HepG2 (cell line): ENCODE measurements at regions of chr5 and their contacts with region 1.

Region 1: DNA sequence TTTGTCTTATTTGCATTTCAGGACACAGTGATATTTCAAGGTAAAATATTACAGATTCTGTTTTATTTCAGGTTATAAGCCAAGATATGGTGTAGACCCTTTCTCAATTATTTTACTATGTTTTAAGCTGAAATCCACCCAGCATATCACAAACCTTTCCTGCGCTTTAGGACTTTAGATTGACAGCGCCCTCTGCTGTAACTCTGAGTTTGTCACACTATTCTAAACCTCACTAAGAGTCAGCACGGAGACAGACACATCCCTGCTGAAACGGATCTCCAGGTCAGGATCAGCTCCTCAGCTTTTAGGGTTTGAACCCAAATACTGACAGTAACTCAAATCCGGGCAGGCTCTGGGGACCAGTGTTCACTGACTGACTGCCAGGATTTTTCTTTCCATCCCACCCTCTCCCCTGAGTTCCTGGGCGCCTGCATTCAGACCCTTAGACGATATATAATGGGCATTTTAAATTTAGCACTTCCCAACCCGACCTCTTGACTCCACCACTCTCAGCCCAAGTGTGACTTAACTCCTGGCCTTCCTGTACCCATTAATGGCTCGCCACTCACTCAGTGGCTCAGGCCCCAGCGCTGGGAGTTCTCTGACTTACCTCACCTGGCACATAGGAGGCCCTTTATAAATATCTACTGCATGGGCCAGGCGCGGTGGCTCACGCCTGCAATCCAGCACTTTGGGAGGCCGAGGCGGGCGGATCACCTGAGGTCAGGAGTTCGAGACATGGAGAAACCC is 33.5 kb downstream of the TLX3 start:
- DNase-seq: peak; percentile 52
- ATAC-seq: peak; percentile 98
- H3K4me3 ChIP-seq: no peak overlapping the region
- H3K27ac ChIP-seq: no peak overlapping the region
- H3K4me1 ChIP-seq: no peaks in the 10 kb centered on the region
- H3K27me3 ChIP-seq: peaks cover 0 to 6% of the 10 kb centered on the region in 2 experiments; a peak in 2 of 5 replicates
- CTCF ChIP-seq: peak; percentile 76
- EP300 ChIP-seq: no peak
- POLR2A ChIP-seq: no peak
- RAD21 ChIP-seq: peak; percentile 40; the same call in 1 of the 2 replicates

Region 2: DNA sequence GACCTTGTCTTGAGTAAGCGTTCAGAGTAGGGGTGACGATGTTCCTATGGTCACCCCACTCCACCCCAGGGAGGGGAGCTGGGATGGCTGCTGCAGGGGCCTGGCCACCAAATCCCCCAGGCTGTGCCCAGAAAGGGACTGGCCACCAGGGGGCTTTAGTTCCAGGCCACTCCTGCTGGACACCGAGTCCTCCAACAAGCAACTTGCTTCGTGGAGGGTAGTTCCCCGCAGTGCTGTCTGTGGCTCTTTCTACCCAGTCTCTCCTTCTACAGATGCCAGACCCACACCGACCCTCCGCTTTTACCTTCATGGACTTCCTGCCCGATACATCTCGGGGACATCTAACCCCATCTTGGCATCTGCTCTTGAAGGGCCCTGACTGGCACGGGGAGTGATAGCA is 594.7 kb before region 1 on chr5:
- CTCF ChIA-PET with region 1: no interaction called
- POLR2A ChIA-PET with region 1: no interaction called
- in situ Hi-C with region 1: loop called (anchors 10 kb)
- intact Hi-C with region 1: no loop called
- DNase-seq: peak; percentile 15
- ATAC-seq: peak; percentile 80
- H3K4me3 ChIP-seq: no peak overlapping the region
- H3K27ac ChIP-seq: no peak overlapping the region
- H3K4me1 ChIP-seq: no peaks in the 10 kb centered on the region
- H3K27me3 ChIP-seq: peaks cover 2 to 25% of the 10 kb centered on the region in 2 experiments; a peak in 3 of 5 replicates
- CTCF ChIP-seq: peak; percentile 49
- EP300 ChIP-seq: no peak
- POLR2A ChIP-seq: no peak
- RAD21 ChIP-seq: no peak

Region 3: DNA sequence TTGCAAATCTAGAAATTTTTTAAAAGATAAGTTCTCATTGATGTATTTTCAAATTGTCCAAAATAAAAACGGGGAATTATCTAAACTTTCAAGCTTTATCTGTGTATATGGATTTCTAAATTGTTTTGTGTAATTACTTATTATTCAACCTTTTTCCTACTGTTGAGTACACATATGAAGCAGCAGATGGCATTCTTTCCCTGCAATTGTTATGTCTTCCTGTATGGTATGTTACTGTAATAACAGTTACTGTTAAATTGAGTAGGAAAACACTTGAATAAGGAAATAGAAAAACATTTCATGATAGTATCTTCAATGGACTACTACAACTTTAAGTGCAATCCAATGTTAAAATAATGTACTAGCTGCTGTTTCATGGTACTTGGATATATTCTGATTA is 355.9 kb before region 1 on chr5:
- CTCF ChIA-PET with region 1: no interaction called
- POLR2A ChIA-PET with region 1: no interaction called
- in situ Hi-C with region 1: no loop called
- intact Hi-C with region 1: loop called (anchors 10 kb)
- DNase-seq: no peak
- ATAC-seq: no peak
- H3K4me3 ChIP-seq: no peak overlapping the region
- H3K27ac ChIP-seq: no peak overlapping the region
- H3K4me1 ChIP-seq: no peaks in the 10 kb centered on the region
- H3K27me3 ChIP-seq: no peaks in the 10 kb centered on the region
- CTCF ChIP-seq: 0 out of 2 replicates have a peak, but pooled peaks have one; percentile 3
- EP300 ChIP-seq: no peak
- POLR2A ChIP-seq: no peak
- RAD21 ChIP-seq: no peak

Region 4: GRCh38 chr5:171207256-171207847 is 135.2 kb before region 1 on chr5:
- CTCF ChIA-PET with region 1: interaction called, 14 read pairs
- POLR2A ChIA-PET with region 1: no interaction called
- in situ Hi-C with region 1: loop called (anchors 5 kb)
- intact Hi-C with region 1: loop called (anchors 1 kb)
- DNase-seq: peak; percentile 27
- ATAC-seq: no peak; the same call in 1 of the 3 replicates
- H3K4me3 ChIP-seq: no peak overlapping the region
- H3K27ac ChIP-seq: no peak overlapping the region
- H3K4me1 ChIP-seq: no peaks in the 10 kb centered on the region
- H3K27me3 ChIP-seq: no peaks in the 10 kb centered on the region
- CTCF ChIP-seq: peak; percentile 54
- EP300 ChIP-seq: no peak
- POLR2A ChIP-seq: no peak
- RAD21 ChIP-seq: no peak

Region 5: GRCh38 chr5:171246231-171246630 is 96.3 kb before region 1 on chr5:
- CTCF ChIA-PET with region 1: no interaction called
- POLR2A ChIA-PET with region 1: no interaction called
- in situ Hi-C with region 1: no loop called
- intact Hi-C with region 1: no loop called
- DNase-seq: no peak
- ATAC-seq: no peak
- H3K4me3 ChIP-seq: no peak overlapping the region
- H3K27ac ChIP-seq: no peak overlapping the region
- H3K4me1 ChIP-seq: peaks cover 9% of the 10 kb centered on the region
- H3K27me3 ChIP-seq: no peaks in the 10 kb centered on the region
- CTCF ChIP-seq: no peak
- EP300 ChIP-seq: no peak
- POLR2A ChIP-seq: no peak
- RAD21 ChIP-seq: no peak

Region 6: DNA sequence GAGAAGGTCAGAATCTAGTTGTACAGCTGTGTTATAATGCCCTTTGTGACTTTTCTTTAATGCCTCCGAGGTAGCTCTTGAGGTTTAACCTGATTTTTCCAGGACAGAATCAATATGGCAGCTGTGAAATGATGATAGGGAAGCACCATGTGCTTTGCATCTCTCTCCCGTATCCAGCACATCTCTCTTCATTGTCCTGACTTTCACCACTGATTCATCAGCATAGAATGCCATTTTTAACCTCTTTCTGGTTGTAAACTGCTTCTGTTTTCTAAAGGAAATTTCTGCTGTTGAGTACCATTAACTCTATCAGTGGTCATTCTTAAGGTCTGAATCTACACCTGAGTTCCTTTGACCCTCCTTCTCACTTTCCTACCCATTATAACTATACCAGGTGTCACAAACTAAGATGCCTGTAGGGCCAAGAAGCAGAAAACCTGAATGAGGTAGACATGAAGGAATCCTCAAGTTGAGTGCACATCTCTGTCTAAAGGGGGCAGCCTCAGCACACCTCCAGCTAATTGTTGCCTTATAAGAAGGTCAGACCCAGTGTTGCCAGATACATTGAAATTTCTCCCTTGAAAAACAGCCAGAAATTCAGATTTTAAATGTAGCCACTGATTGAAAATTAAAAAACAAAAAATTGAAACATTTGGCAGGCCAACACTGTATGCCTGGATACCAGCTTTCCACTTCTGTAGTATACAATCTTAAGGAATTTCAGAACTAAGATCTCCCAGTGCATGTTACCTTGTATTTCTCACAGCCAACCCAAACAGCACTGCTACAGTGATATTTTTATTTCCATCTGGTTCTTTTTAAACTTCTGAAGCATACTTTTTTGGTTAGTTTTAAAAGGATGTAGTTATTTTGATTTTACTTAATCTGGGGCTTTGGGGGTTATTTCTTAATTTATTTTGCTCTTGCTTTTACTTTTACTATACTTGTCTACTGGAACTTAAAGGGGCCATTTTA is 69.3 kb before region 1 on chr5:
- CTCF ChIA-PET with region 1: no interaction called
- POLR2A ChIA-PET with region 1: no interaction called
- in situ Hi-C with region 1: no loop called
- intact Hi-C with region 1: loop called (anchors 1 kb)
- DNase-seq: peak; percentile 25
- ATAC-seq: peak; percentile 80
- H3K4me3 ChIP-seq: no peak overlapping the region
- H3K27ac ChIP-seq: no peak overlapping the region
- H3K4me1 ChIP-seq: no peaks in the 10 kb centered on the region
- H3K27me3 ChIP-seq: no peaks in the 10 kb centered on the region
- CTCF ChIP-seq: peak; percentile 56
- EP300 ChIP-seq: no peak
- POLR2A ChIP-seq: no peak
- RAD21 ChIP-seq: no peak

Region 7: DNA sequence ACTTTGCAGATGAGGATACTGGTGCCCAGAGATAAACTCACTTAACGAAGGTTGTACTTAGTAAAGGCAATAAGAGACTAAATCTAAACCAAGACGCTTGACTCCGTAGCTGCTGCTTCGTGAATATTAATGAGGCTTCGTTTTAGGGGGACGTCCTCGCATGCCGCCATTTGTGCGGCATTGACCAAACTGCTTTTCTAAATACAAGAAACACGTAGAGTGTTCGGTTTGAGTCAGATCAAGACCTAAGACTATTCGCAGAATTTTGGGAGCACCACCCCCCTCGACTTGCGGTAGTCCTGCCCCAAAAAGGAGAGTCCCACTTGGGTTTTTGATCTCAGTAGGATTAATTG is 46.3 kb after region 1 on chr5:
- CTCF ChIA-PET with region 1: no interaction called
- POLR2A ChIA-PET with region 1: no interaction called
- in situ Hi-C with region 1: no loop called
- intact Hi-C with region 1: no loop called
- DNase-seq: no peak
- ATAC-seq: no peak
- H3K4me3 ChIP-seq: peak overlapping the region; percentile 88 to 93 (median 92)
- H3K27ac ChIP-seq: peak overlapping the region; percentile 88
- H3K4me1 ChIP-seq: peaks cover 46% of the 10 kb centered on the region
- H3K27me3 ChIP-seq: no peaks in the 10 kb centered on the region; a peak in 1 of 5 replicates
- CTCF ChIP-seq: no peak
- EP300 ChIP-seq: no peak
- POLR2A ChIP-seq: no peak
- RAD21 ChIP-seq: no peak